Dendritic cell treated with granulocyte-macrophage colony-stimulating factor and Interleukin-4, amounts not matched to agents 40 ng/mL and 50 ng/mL, for 4 days (primary cell): ENCODE measurements at regions of chr12 and their contacts with region 1.

Region 1: GRCh38 chr12:66301944-66302826 is at the start of gene HELB:
- H3K4me3 Mint-ChIP-seq: peak within 1 kb of the TSS; percentile 97
- H3K27ac Mint-ChIP-seq: peak within 1 kb of the TSS; percentile 93
- H3K4me1 Mint-ChIP-seq: peaks cover 29% of the 10 kb centered on the region
- H3K27me3 Mint-ChIP-seq: no peaks in the 10 kb centered on the region

Region 2: DNA sequence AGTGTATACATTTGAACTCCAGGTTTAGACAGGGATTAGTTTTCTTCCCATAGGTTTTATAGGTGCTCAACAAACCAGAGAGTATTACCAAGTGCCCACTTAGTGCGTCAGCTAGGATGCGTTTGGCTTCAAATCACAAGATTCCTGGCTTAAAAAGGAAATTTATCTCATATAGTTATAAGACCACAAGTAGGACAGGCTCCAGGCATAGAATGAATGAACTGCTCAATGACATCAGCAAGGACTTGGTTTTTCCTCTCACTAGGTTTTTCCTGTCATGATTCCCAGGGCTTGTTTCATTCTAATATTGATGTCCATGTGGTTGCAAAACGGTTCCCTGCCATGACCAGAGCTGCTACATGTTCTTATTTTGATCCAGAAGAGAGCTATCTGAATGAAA is 119.2 kb before region 1 on chr12:
- intact Hi-C with region 1: no loop called
- H3K4me3 Mint-ChIP-seq: no peak overlapping the region
- H3K27ac Mint-ChIP-seq: no peak overlapping the region
- H3K4me1 Mint-ChIP-seq: peaks cover 29% of the 10 kb centered on the region
- H3K27me3 Mint-ChIP-seq: no peaks in the 10 kb centered on the region

Region 3: DNA sequence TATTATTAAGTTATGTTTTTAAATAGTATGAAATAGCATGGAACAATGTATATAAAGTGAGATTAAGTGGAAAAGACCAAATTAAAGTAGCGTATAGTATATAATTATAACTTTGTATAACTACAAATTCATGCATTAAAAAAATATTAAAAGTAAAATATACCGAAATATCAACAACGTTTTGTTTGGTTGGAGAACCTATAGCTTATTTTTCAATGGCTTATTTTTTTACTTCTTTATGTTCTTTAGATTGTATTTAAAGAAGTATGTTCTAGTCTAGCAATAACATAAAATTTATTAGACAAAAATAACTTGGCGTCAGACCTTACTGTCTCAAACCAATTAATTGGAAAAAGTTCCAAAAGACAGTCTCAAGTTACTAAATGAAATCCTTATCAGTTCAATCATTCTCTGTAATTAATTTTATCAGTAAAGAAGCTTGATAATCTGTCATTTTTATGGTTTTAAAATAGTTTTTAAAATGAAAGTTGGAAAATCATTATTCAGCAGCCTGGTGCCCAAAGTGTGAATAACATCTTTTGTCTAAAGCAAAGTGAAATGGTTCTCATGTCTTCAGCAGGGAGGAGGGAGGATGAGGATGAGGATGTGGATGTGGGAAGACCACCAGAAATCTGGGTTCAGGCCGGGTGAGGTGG is 66.4 kb before region 1 on chr12:
- intact Hi-C with region 1: loop called (anchors 5 kb)
- H3K4me3 Mint-ChIP-seq: peak overlapping the region; percentile 72
- H3K27ac Mint-ChIP-seq: peak overlapping the region; percentile 85
- H3K4me1 Mint-ChIP-seq: peaks cover 66% of the 10 kb centered on the region
- H3K27me3 Mint-ChIP-seq: no peaks in the 10 kb centered on the region

Region 4: GRCh38 chr12:66345212-66345611 is 43.0 kb after region 1 on chr12:
- intact Hi-C with region 1: no loop called
- H3K4me3 Mint-ChIP-seq: no peak overlapping the region
- H3K27ac Mint-ChIP-seq: no peak overlapping the region
- H3K4me1 Mint-ChIP-seq: no peaks in the 10 kb centered on the region
- H3K27me3 Mint-ChIP-seq: no peaks in the 10 kb centered on the region

Region 5: DNA sequence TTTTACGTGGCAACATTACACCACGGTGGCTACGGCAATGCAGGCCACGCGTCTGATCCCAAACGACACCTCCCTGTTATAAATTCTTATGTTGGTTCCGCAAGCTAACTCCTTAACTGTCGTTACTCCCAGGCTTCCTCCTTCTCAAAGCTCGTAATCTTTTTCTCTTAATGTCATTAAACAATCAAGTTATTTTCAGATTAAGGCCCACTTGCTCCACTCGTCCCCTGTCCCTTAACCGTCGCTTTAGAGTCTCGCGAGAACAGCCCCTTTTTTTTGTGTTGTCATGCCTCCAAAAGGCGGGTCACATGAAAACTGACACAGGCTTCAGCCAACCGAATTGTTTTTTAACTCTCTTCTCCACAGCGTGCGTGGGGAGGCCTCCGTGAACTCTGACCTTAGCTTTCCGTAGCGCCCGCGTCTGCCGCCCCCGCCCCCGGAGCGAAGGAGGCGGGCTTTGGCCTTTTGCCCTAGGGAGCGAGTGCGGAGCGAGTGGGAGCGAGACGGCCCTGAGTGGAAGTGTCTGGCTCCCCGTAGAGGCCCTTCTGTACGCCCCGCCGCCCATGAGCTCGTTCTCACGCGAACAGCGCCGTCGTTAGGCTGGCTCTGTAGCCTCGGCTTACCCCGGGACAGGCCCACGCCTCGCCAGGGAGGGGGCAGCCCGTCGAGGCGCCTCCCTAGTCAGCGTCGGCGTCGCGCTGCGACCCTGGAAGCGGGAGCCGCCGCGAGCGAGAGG is 966.9 kb after region 1 on chr12 and contains the start of gene CAND1:
- intact Hi-C with region 1: loop called (anchors 10 kb)
- H3K4me3 Mint-ChIP-seq: peak within 1 kb of the TSS; percentile 79
- H3K27ac Mint-ChIP-seq: peak within 1 kb of the TSS; percentile 97
- H3K4me1 Mint-ChIP-seq: peaks cover 30% of the 10 kb centered on the region
- H3K27me3 Mint-ChIP-seq: no peaks in the 10 kb centered on the region